Endothelial cell of umbilical vein (primary cell): ENCODE measurements at regions of chr10 and their contacts with region 1.

Region 1: DNA sequence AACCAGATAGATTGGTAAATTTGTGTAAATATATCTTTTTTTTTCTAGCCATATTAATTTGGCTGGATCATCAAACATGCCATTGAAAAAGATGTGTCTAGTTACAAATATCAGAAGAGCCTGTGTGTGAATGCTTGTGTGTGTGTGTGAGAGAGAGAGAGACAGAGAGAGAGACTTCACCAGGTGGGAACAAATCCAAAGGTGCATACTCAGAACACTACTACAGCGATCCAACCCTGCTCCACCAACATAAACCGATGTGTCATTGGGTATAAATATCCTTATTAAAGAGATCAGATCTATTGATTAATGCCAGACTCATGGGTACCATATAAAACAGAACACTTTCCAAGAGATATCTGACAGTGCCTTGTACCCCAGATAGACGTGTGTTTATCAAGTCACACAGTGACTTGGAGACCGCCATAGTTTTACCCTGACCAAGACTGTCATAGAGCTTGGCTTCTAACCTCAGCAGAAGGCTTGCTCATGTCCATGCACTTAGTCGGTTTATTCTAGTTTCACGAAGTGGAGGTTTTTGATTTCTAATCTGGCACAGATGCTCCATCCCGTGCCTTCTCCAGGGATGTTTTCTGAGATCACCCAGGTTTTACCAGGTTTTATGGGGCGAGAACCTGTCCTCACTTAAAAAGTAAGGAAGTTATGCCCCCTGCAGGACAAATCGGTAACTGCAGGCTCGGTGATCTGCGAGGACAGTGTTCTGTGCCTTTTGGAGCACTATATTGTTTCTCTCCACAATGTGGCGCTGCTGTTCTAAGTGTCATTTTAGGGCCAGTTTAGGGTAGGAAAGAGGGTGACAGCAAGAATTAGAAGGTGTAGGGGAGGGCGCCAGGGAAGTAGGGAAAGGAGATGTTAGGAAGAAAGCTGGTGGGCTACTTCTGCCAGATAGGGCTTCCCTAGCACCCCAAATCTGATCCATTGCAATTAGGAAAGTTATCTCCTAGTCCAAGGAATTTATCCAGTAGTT is 29.3 kb upstream of the WNT8B start:
- DNase-seq: peak; percentile 93
- H3K4me3 ChIP-seq: no peak overlapping the region
- H3K27ac ChIP-seq: no peak overlapping the region
- H3K4me1 ChIP-seq: no peaks in the 10 kb centered on the region
- H3K27me3 ChIP-seq: peaks cover 2% of the 10 kb centered on the region in 2 experiments
- CTCF ChIP-seq: peak; percentile 91 to 100
- POLR2A ChIP-seq: no peak

Region 2: DNA sequence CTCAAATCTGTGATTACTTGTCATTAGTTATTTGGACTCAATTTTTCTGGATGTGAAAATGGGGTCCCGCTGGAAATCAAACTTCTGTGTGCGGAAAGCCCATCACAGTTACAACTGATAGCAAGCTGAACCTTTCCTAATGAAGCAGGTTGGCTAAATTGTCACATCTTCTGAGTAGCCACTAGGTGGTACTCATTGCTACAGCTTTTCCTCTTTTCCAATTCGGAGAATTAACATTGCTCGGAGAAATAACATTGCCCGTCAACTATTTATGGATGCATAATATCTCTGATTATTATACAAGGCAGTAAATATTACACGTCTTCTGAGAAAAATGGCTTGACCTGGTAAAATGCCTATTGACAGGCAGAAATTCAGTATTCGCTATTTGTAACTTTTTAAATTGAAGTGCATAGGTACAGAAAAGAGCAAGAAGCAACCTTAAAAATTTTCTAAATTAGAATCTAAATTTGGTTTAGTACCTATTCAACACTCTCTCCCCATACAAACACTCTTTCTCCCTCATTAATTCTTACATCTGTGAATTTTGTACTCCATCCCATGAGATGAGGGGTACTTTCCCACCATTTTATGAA is 129.7 kb before region 1 on chr10:
- CTCF ChIA-PET with region 1: interaction called, 13 read pairs
- POLR2A ChIA-PET with region 1: no interaction called
- dilution Hi-C with region 1: no loop called
- intact Hi-C with region 1: loop called (anchors 1 kb)
- DNase-seq: peak; percentile 22
- H3K4me3 ChIP-seq: no peak overlapping the region
- H3K27ac ChIP-seq: no peak overlapping the region
- H3K4me1 ChIP-seq: no peaks in the 10 kb centered on the region
- H3K27me3 ChIP-seq: peaks cover 11 to 18% of the 10 kb centered on the region in 2 experiments
- CTCF ChIP-seq: peak; percentile 52
- POLR2A ChIP-seq: no peak

Region 3: GRCh38 chr10:100346765-100347567 is 86.6 kb before region 1 on chr10 and contains the start of gene SCD:
- CTCF ChIA-PET with region 1: interaction called, 110 read pairs
- POLR2A ChIA-PET with region 1: no interaction called
- dilution Hi-C with region 1: no loop called
- intact Hi-C with region 1: loop called (anchors 1 kb)
- DNase-seq: peak; percentile 92
- H3K4me3 ChIP-seq: peak within 1 kb of the TSS; percentile 85 to 87 (median 85)
- H3K27ac ChIP-seq: peak within 1 kb of the TSS; percentile 48
- H3K4me1 ChIP-seq: peaks cover 42% of the 10 kb centered on the region
- H3K27me3 ChIP-seq: no peaks in the 10 kb centered on the region
- CTCF ChIP-seq: no peak
- POLR2A ChIP-seq: peak; percentile 83
- total RNA-seq, gene SCD: 396 and 426 TPM in 2 replicates

Region 4: GRCh38 chr10:100481462-100482081 is 48.0 kb after region 1 on chr10:
- CTCF ChIA-PET with region 1: interaction called, 4 read pairs
- POLR2A ChIA-PET with region 1: no interaction called
- dilution Hi-C with region 1: no loop called
- intact Hi-C with region 1: loop called (anchors 2 kb)
- DNase-seq: peak; percentile 97
- H3K4me3 ChIP-seq: peak overlapping the region; percentile 13 to 48 (median 27)
- H3K27ac ChIP-seq: no peak overlapping the region
- H3K4me1 ChIP-seq: peaks cover 12% of the 10 kb centered on the region
- H3K27me3 ChIP-seq: peaks cover 35 to 40% of the 10 kb centered on the region in 2 experiments
- CTCF ChIP-seq: peak in 1 of 2 donors; percentile 2
- POLR2A ChIP-seq: no peak

Region 5: DNA sequence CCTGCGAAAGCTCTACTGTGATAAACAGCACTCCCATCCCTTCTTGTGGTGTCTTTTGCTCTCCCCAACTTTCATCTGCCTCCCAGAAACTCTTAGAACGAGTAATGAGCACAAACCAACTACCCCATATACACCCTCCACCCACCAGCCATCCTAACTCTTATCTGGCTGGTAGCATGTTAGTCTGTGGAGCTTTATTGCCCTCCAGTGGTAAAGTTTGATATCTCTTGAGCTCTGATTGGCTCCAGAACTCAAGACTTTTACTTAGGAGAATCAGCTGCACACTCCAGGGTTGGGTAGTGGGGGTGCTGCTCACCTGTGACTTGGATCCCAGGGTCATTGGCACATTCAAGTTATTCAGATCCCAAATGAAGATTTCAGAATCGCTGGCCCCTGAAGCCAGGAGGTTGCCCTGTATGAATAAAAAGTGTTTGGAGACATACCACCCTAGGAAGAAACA is 75.2 kb after region 1 on chr10:
- CTCF ChIA-PET with region 1: interaction called, 39 read pairs
- POLR2A ChIA-PET with region 1: no interaction called
- dilution Hi-C with region 1: no loop called
- intact Hi-C with region 1: loop called (anchors 1 kb)
- DNase-seq: peak; percentile 73
- H3K4me3 ChIP-seq: no peak overlapping the region
- H3K27ac ChIP-seq: no peak overlapping the region
- H3K4me1 ChIP-seq: no peaks in the 10 kb centered on the region
- H3K27me3 ChIP-seq: no peaks in the 10 kb centered on the region
- CTCF ChIP-seq: peak; percentile 51 to 54
- POLR2A ChIP-seq: no peak

Region 6: DNA sequence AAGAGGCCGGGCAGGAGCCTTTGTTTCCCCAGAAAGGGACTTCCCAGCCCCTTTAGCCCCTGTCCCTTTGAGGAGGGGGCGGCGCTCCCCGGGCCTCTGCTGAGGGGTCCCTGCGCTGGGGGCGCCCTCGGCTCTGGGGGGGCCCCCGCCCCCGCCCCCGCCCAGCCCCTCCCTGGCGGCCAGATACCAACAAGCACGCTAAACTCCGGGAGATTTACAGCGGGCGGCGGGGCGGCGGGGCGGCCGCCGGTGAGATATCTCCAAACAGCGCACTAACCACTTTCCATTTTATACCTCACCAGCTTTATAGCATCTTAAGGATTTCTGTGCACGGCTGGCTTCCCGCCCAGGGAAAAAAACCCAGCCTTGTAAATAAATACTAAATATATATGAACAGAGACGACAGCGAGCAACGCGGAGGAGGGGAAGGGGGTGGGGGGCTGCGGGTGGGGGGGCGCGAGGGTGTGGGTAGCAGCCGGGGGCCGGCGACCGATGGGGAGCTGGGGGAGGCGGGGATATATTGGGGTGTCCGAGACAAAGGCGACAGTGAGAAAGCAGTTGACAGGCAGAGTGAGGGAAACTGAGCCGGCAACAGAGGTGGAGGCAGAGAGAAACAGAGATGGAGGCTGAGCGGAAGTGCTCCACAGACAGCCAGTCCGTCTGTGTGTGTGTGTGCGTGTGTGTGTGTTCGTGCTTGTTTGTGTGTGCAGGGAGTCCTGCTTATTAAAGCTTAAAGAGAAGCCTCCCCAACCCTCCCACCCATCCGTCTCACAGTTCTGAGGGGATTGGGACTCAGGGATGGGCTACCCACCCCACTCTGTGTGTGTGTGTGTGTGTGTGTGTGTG is 188.0 kb after region 1 on chr10:
- CTCF ChIA-PET with region 1: no interaction called
- POLR2A ChIA-PET with region 1: no interaction called
- dilution Hi-C with region 1: no loop called
- intact Hi-C with region 1: no loop called
- DNase-seq: no peak
- H3K4me3 ChIP-seq: no peak overlapping the region
- H3K27ac ChIP-seq: no peak overlapping the region
- H3K4me1 ChIP-seq: no peaks in the 10 kb centered on the region
- H3K27me3 ChIP-seq: peaks cover 39 to 43% of the 10 kb centered on the region in 2 experiments
- CTCF ChIP-seq: no peak
- POLR2A ChIP-seq: no peak